HEK293T (cell line): ENCODE measurements at regions of chr5 and their contacts with region 1.

Region 1: DNA sequence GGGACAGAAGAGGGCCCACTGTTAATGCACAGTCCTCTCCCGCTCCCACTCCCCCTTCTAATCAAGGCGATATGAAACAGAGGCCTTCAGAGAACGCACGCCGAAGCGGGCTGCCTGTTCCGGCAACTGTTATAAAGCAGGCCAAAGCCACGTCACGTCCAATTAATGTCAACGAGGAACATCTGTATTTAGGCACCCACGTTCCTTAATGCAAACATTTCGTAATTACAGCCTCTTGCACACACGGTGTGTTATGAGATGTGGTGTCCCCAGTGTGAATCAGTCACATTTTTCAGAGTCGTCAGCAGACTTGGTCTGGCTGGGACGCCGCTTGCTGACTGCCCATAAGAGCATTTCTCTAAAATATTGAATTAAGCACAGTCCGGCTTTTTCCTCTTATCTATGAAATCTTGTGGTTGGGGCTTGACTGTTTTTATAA is 339.0 kb downstream of the NSG2 start:
- DNase-seq: no peak

Region 2: GRCh38 chr5:174119468-174119881 is 265.1 kb before region 1 on chr5:
- CTCF ChIA-PET with region 1: no interaction called
- POLR2A ChIA-PET with region 1: no interaction called
- DNase-seq: no peak

Region 3: GRCh38 chr5:174295702-174296436 is 88.7 kb before region 1 on chr5:
- CTCF ChIA-PET with region 1: no interaction called
- POLR2A ChIA-PET with region 1: no interaction called
- DNase-seq: no peak

Region 4: GRCh38 chr5:174338185-174339010 is 46.1 kb before region 1 on chr5:
- CTCF ChIA-PET with region 1: no interaction called
- POLR2A ChIA-PET with region 1: interaction called, 19 read pairs
- DNase-seq: peak; percentile 66

Region 5: GRCh38 chr5:174355208-174355612 is 29.3 kb before region 1 on chr5:
- CTCF ChIA-PET with region 1: interaction called, 4 read pairs
- POLR2A ChIA-PET with region 1: interaction called, 21 read pairs
- DNase-seq: no peak

Region 6: GRCh38 chr5:174371595-174372128 is 12.9 kb before region 1 on chr5:
- CTCF ChIA-PET with region 1: no interaction called
- POLR2A ChIA-PET with region 1: interaction called, 10 read pairs
- DNase-seq: peak; percentile 63